A673 (cell line): ENCODE measurements at regions of chr14 and their contacts with region 1.

Region 1: DNA sequence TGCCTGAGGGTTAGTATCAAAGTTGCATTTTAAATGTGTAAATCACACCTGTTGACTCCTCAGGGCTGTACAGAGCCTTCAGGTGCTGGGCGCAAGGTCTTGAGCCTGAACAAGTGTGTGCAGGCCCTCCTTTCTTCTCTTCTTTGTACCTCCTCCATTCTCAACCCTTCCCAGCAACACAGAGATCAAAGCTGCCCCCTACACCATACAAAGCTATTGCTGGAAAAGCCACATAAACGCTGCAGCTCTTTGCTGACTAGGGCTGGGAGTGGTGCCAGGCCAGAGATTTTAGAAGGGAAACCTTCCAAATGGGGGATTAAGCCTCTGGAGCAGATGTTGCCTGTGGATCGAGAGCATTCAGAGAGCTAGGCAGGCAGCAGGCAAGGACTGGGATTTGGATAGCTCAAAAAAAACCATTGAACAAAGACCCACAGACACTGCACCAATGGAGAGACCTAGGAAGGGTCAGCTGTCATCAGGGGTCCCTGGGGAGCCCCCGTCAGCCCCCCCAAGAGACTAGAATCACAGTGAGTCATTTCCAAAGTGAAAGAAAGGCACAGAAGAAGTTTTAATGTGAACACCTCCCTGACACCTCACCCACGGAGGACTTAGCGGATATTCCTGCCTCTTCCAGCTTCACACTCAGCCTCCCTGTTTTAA is 18.2 kb upstream of the SUSD6 start:
- DNase-seq: peak; percentile 94
- H3K4me3 ChIP-seq: peak overlapping the region; percentile 20
- H3K27ac ChIP-seq: peak overlapping the region; percentile 80
- H3K4me1 ChIP-seq: peaks cover 14% of the 10 kb centered on the region
- H3K27me3 ChIP-seq: no peaks in the 10 kb centered on the region
- CTCF ChIP-seq: 0 out of 2 replicates have a peak, but pooled peaks have one; percentile 13

Region 2: GRCh38 chr14:69242311-69243224 is 350.6 kb before region 1 on chr14:
- CTCF ChIA-PET with region 1: no interaction called
- POLR2A ChIA-PET with region 1: no interaction called
- intact Hi-C with region 1: no loop called
- DNase-seq: peak; percentile 72
- H3K4me3 ChIP-seq: no peak overlapping the region
- H3K27ac ChIP-seq: no peak overlapping the region
- H3K4me1 ChIP-seq: no peaks in the 10 kb centered on the region
- H3K27me3 ChIP-seq: no peaks in the 10 kb centered on the region
- CTCF ChIP-seq: peak; percentile 80

Region 3: GRCh38 chr14:69766984-69767368 is 173.8 kb after region 1 on chr14 and contains the start of gene SRSF5:
- CTCF ChIA-PET with region 1: no interaction called
- POLR2A ChIA-PET with region 1: interaction called, 12 read pairs
- intact Hi-C with region 1: no loop called
- DNase-seq: peak; percentile 96
- H3K4me3 ChIP-seq: peak within 1 kb of the TSS; percentile 82
- H3K27ac ChIP-seq: peak within 1 kb of the TSS; percentile 99
- H3K4me1 ChIP-seq: peaks cover 19% of the 10 kb centered on the region
- H3K27me3 ChIP-seq: no peaks in the 10 kb centered on the region
- CTCF ChIP-seq: no peak
- total RNA-seq, gene SRSF5: 324 and 338 TPM in 2 replicates